Colonic mucosa (tissue), 4 donors: ENCODE measurements at regions of chr2 and their contacts with region 1.

Region 1: DNA sequence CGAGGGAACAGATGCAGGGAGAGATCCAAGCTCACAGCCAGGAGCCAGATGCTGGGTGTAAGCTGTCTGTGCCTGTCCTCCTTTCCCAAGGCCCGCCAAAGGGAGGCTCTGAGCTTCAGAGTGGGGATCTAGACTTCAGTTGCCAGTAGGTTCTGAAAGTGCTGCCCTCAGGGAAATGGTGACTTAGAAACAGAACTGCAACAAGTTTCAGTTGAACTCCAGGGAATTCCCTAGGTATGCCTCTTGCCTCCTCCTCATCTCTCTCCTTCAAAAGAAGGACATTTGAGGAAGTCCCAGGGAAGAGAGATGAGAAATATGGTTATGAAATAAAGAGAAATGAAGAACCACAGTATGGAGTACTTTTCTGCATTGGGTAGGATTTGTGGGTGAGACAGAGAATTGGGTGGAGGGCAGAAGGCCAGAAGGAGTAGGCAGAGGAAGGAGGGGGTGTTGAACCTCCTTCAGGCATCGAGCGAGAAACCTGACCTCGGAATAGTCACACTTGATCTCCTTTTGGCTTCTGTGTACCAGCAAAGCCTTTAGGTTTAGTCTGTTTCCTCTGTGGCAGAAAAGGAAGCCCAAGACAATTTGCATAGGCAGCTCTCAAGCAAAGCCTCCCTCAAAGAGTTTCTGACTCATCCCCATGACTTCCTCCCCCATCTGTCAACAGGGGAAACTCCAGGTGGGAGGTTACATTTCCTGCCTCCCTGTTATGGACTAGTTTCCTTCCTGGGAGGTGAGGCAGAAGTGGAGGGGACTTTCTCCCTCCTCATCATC is 45.7 kb downstream of the QPCT start:
- DNase-seq: no peak
- H3K4me3 ChIP-seq: no peak overlapping the region
- H3K27ac ChIP-seq: peak overlapping the region; percentile 55
- H3K4me1 ChIP-seq: peaks cover 5% of the 10 kb centered on the region
- H3K27me3 ChIP-seq: no peaks in the 10 kb centered on the region
- CTCF ChIP-seq: no peak

Region 2: DNA sequence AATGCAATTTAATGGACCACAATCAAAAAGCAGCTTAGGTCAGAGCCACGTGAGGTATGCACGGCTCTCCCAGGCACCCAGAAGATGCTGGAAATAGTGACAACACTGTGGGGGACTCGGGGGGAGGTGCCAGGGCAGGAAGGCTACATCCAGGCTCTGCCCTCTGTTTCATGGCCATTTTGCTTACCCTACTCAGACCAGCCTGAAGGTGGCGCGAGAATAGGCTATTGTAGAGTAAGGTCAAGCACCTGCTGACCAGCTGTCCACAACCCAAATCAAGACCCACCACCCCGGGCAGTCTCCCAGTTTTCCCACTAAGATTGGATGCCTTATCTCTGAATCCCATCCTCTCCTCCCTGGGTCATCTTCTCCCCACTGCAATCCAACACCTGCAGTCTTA is 578.0 kb before region 1 on chr2:
- intact Hi-C with region 1: no loop called
- DNase-seq: no peak
- H3K4me3 ChIP-seq: no peak overlapping the region
- H3K27ac ChIP-seq: no peak overlapping the region
- H3K4me1 ChIP-seq: no peaks in the 10 kb centered on the region
- H3K27me3 ChIP-seq: no peaks in the 10 kb centered on the region
- CTCF ChIP-seq: no peak

Region 3: GRCh38 chr2:36878429-36878828 is 511.7 kb before region 1 on chr2:
- intact Hi-C with region 1: no loop called
- DNase-seq: no peak
- H3K4me3 ChIP-seq: no peak overlapping the region
- H3K27ac ChIP-seq: no peak overlapping the region
- H3K4me1 ChIP-seq: no peaks in the 10 kb centered on the region
- H3K27me3 ChIP-seq: no peaks in the 10 kb centered on the region
- CTCF ChIP-seq: no peak

Region 4: DNA sequence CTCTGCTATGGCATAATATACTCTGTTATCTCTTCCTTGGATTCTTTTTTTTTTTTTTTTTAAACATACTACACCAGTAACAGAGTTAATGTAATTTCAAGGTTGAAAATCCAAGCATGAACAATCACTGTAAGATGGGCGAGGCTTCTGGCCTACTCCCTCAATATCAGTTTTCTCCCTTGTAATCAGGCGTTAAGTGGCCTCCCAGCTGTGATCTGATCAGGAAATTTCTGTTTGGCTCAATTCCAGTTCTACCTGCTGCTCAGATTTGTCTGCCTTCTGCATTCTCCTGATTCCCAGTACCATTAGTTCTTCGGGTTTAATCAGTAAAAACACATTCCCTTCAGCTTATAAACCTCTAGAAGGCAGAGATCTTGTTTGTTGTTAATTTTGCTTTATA is 84.2 kb before region 1 on chr2:
- intact Hi-C with region 1: no loop called
- DNase-seq: peak; percentile 50
- H3K4me3 ChIP-seq: no peak overlapping the region
- H3K27ac ChIP-seq: no peak overlapping the region
- H3K4me1 ChIP-seq: no peaks in the 10 kb centered on the region
- H3K27me3 ChIP-seq: no peaks in the 10 kb centered on the region
- CTCF ChIP-seq: no peak

Region 5: GRCh38 chr2:37802899-37803379 is 412.8 kb after region 1 on chr2:
- intact Hi-C with region 1: no loop called
- DNase-seq: no peak
- H3K4me3 ChIP-seq: no peak overlapping the region
- H3K27ac ChIP-seq: peak overlapping the region; percentile 3
- H3K4me1 ChIP-seq: peaks cover 5% of the 10 kb centered on the region
- H3K27me3 ChIP-seq: no peaks in the 10 kb centered on the region
- CTCF ChIP-seq: no peak

Region 6: GRCh38 chr2:37832590-37833197 is 442.5 kb after region 1 on chr2:
- intact Hi-C with region 1: loop called (anchors 5 kb)
- DNase-seq: peak; percentile 94
- H3K4me3 ChIP-seq: no peak overlapping the region
- H3K27ac ChIP-seq: no peak overlapping the region
- H3K4me1 ChIP-seq: no peaks in the 10 kb centered on the region
- H3K27me3 ChIP-seq: no peaks in the 10 kb centered on the region
- CTCF ChIP-seq: peak; percentile 71

Region 7: GRCh38 chr2:37871456-37872191 is 481.4 kb after region 1 on chr2:
- intact Hi-C with region 1: loop called (anchors 5 kb)
- DNase-seq: no peak
- H3K4me3 ChIP-seq: no peak overlapping the region
- H3K27ac ChIP-seq: no peak overlapping the region
- H3K4me1 ChIP-seq: no peaks in the 10 kb centered on the region
- H3K27me3 ChIP-seq: no peaks in the 10 kb centered on the region
- CTCF ChIP-seq: no peak

Region 8: DNA sequence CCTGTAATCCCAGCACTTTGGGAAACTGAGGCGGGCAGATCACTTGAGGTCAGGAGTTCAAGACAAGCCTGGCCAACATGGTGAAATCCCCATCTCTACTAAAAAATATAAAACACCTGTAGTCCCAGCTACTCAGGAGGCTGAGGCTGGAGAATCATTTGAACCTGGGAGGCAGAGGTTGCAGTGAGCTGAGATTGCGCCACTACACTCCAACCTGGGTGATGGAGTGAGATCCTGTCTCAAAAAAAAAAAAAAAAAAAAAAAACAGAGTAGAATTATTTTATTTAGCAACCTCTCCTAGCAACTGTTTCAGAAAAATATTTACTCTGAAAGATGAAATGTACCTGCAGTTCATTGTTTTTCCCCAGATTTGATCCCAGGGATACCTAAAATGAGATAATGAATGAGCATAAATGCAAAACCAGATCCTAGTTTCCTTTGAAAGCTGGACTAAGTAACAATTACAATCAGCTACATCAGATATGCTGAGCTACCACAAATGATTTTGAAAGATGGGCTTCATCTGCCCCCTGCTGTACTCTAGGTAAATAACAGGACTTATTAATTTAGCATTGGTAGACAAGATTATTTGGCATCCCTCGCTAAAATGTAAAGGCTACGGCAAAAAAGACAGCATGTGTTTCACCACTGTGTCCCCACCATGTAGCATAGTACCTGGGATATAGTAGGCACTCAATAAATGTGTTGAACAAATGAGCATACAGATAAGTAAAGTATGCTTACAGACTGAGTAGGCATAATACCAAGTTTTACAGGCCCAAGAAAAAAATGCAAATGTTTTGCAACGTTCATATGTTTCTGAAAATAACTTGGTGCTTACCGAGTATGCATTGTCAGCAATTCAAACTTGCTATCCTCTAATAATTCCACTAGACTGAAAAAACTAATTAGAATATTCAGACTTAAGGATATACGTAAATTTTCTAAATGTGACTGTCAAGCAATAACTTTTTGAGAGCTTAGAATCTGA is 884.4 kb after region 1 on chr2:
- intact Hi-C with region 1: loop called (anchors 10 kb)
- DNase-seq: no peak
- H3K4me3 ChIP-seq: no peak overlapping the region
- H3K27ac ChIP-seq: no peak overlapping the region
- H3K4me1 ChIP-seq: no peaks in the 10 kb centered on the region
- H3K27me3 ChIP-seq: no peaks in the 10 kb centered on the region
- CTCF ChIP-seq: peak; percentile 35